ENCODE measurements at regions of chr1 and their contacts with region 1.

Region 1: DNA sequence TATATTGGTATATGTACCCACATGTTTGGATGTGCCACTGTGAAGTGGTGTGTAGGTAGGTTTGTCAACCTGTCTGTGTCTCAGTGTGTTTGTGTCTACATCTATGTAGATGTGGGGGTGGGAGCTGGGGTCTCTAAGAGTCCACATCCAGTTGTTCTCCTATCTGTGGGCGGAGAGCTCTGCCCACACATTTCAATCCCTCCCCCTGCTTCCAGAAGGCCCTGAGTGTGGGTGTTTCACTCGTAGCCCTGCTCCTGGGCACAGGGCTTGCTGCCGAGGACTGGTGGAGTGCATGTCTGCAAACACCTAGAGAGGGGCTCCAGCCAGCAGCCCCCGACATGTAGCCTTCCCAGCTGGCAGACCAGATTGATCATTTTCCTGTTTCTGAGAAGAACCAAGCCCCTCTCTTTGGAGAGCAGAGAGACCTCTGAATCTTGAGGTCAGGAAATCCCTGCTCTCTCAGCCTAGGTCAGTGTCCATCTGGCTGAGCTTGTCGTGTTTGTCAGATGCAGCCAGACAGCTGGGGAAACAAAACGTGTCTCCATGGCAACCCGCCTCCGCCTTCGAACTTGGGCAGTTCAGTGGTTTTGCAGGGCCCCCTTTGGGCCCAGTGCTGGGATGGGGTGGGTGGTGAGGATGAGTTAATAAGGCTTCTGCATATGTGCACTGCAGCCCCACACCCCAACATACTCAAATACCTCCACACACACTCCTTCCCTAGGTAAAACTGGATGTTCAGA is 31.2 kb upstream of the SYNC start:
- DNase-seq: no peak
- H3K4me3 ChIP-seq: no peak overlapping the region
- H3K27ac ChIP-seq: no peak overlapping the region
- H3K4me1 ChIP-seq: peaks cover 11 to 16% (median 14%) of the 10 kb centered on the region in 4 experiments
- H3K27me3 ChIP-seq: peaks cover 0 to 4% (median 0%) of the 10 kb centered on the region in 4 experiments; a peak in 1 of 7 replicates
- CTCF ChIP-seq: no peak
- EP300 ChIP-seq: no peak
- POLR2A ChIP-seq: no peak
- RAD21 ChIP-seq: no peak

Region 2: DNA sequence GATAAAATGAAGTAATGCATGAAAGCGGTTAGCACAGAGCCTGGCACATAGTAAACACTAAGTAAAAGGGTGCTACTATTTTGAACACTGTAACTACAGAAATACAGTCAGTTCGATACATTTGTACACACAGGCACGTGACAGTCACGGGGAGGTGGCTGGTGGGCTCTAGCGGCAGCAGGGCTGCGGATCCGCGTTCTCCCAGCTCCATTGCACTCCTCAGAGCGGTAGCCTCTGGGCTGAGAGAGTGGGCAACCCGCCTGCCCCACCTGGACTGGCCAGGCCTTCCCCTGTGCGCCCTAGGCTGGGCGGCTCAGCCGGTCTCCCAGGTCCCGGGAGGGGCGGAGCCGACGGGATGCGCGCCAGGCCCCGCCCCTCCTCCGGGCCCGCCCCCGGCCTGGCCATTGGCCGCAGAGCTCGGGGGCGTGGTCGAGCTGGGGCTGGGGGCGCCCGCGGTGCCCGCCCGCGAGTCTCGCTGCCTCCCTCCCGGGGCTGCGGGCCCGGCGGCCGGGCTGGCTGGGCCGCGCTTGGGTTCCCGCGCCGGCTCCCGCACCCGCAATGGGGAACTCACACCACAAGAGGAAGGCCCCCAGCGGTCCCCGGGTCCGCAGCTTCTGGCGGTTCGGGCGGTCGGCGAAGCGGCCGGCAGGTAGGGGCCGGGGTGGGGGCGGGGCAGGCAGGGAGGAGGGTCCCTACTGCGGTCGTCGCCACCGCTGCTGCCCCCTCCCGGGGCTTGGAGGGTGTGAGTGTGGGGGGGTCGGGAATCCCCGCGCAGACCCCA is 20.0 kb after region 1 on chr1:
- CTCF ChIA-PET with region 1: interaction called, 17 read pairs
- POLR2A ChIA-PET with region 1: interaction called, 11 read pairs
- DNase-seq: peak; percentile 59 to 91
- H3K4me3 ChIP-seq: peak overlapping the region; percentile 79 to 100 (median 94)
- H3K27ac ChIP-seq: peak overlapping the region; percentile 92
- H3K4me1 ChIP-seq: peaks cover 16 to 37% (median 22%) of the 10 kb centered on the region in 4 experiments
- H3K27me3 ChIP-seq: no peaks in the 10 kb centered on the region
- CTCF ChIP-seq: peak in 1 of 3 experiments; percentile 26; a peak in 1 of 4 replicates
- EP300 ChIP-seq: no peak
- POLR2A ChIP-seq: peak in 1 of 2 experiments; percentile 70; a peak in 2 of 3 replicates
- RAD21 ChIP-seq: peak; percentile 3 to 15; a peak in 2 of 4 replicates

Region 3: GRCh38 chr1:32761253-32761880 is 27.6 kb after region 1 on chr1:
- CTCF ChIA-PET with region 1: interaction called, 3 read pairs
- POLR2A ChIA-PET with region 1: interaction called, 11 read pairs
- DNase-seq: peak in 1 of 2 experiments; percentile 54
- H3K4me3 ChIP-seq: peak overlapping the region in 2 of 4 experiments; percentile 12 to 51; a peak in 2 of 8 replicates
- H3K27ac ChIP-seq: peak overlapping the region; percentile 87
- H3K4me1 ChIP-seq: peaks cover 35 to 60% (median 46%) of the 10 kb centered on the region in 4 experiments
- H3K27me3 ChIP-seq: no peaks in the 10 kb centered on the region
- CTCF ChIP-seq: 0 out of 4 replicates have a peak, but pooled peaks of 1 of the 3 experiments have one; percentile 1
- EP300 ChIP-seq: 0 out of 3 replicates have a peak, but pooled peaks of 1 of the 2 experiments have one; percentile 50
- POLR2A ChIP-seq: no peak
- RAD21 ChIP-seq: peak in 1 of 2 experiments; percentile 15; a peak in 2 of 4 replicates

Region 4: GRCh38 chr1:32801096-32801715 is 67.5 kb after region 1 on chr1:
- CTCF ChIA-PET with region 1: no interaction called
- POLR2A ChIA-PET with region 1: no interaction called
- DNase-seq: no peak
- H3K4me3 ChIP-seq: no peak overlapping the region
- H3K27ac ChIP-seq: no peak overlapping the region
- H3K4me1 ChIP-seq: no peaks in the 10 kb centered on the region
- H3K27me3 ChIP-seq: no peaks in the 10 kb centered on the region
- CTCF ChIP-seq: no peak
- EP300 ChIP-seq: no peak
- POLR2A ChIP-seq: no peak
- RAD21 ChIP-seq: no peak

Region 5: GRCh38 chr1:32939655-32940371 is 206.1 kb after region 1 on chr1:
- CTCF ChIA-PET with region 1: no interaction called
- POLR2A ChIA-PET with region 1: no interaction called
- DNase-seq: no peak
- H3K4me3 ChIP-seq: no peak overlapping the region
- H3K27ac ChIP-seq: no peak overlapping the region
- H3K4me1 ChIP-seq: no peaks in the 10 kb centered on the region
- H3K27me3 ChIP-seq: no peaks in the 10 kb centered on the region
- CTCF ChIP-seq: no peak
- EP300 ChIP-seq: no peak
- POLR2A ChIP-seq: no peak
- RAD21 ChIP-seq: no peak

Measured in H1 (cell line).